Vagina (tissue), 2 donors: ENCODE measurements at regions of chr20 and their contacts with region 1.

Region 1: DNA sequence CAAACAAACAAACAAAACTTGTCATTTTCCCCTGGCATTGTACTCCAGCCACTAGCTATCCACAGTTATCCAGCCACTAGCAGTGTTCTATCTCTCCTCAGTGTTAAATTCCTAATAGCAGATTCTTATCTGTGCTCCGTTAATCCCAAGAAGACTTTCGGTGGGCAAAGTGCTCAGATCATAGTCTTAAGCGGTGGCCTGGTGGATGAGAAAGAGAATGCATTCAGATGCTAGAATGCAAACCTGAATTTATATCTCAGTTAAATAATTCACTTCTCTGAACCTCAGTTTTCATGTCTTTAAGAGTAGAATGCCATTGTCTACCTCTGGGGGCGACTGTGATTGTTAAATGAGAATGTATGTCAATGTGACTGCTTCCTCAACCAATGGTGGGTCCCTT is 47.7 kb upstream of the KCNG1 start:
- DNase-seq: no peak
- H3K4me3 ChIP-seq: no peak overlapping the region
- H3K27ac ChIP-seq: no peak overlapping the region
- H3K4me1 ChIP-seq: no peaks in the 10 kb centered on the region
- H3K27me3 ChIP-seq: no peaks in the 10 kb centered on the region
- CTCF ChIP-seq: no peak
- POLR2A ChIP-seq: no peak

Region 2: GRCh38 chr20:51195419-51195901 is 124.8 kb after region 1 on chr20:
- intact Hi-C with region 1: no loop called
- DNase-seq: no peak
- H3K4me3 ChIP-seq: no peak overlapping the region
- H3K27ac ChIP-seq: no peak overlapping the region
- H3K4me1 ChIP-seq: no peaks in the 10 kb centered on the region
- H3K27me3 ChIP-seq: no peaks in the 10 kb centered on the region
- CTCF ChIP-seq: no peak
- POLR2A ChIP-seq: no peak

Region 3: GRCh38 chr20:52889225-52889624 is 1818.6 kb after region 1 on chr20:
- intact Hi-C with region 1: loop called (anchors 5 kb)
- DNase-seq: no peak
- H3K4me3 ChIP-seq: no peak overlapping the region
- H3K27ac ChIP-seq: no peak overlapping the region
- H3K4me1 ChIP-seq: no peaks in the 10 kb centered on the region
- H3K27me3 ChIP-seq: no peaks in the 10 kb centered on the region
- CTCF ChIP-seq: no peak
- POLR2A ChIP-seq: no peak